Upper lobe of right lung (tissue), 1 donor: ENCODE measurements at regions of chr15 and their contacts with region 1.

Region 1: DNA sequence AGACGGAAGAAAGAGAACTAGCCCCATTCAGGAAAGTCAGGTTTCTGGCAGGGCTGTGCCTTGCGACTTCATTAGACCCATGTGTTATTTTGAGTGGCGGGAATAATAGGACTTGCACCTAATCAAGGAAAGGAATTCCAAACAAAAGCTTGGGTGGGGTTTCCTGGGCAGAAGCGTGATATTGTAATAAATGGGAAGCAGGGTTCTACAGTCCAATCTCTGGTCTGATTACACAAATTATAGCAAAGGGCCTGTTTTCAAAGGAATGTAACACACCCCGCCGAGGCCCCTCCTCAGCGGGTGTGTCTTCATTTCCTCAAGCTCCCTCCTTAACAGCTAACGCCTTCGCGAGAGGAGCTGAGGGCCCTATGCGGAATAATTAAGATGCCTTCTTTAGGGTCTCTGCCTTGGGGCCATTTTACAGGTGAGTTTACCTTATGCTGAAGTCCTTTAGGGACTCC is 396.0 kb upstream of the C2CD4B start:
- DNase-seq: no peak
- ATAC-seq: peak; percentile 65
- H3K4me3 ChIP-seq: no peak overlapping the region
- H3K27ac ChIP-seq: no peak overlapping the region
- H3K4me1 ChIP-seq: peaks cover 9% of the 10 kb centered on the region
- H3K27me3 ChIP-seq: no peaks in the 10 kb centered on the region
- CTCF ChIP-seq: no peak

Region 2: GRCh38 chr15:62742409-62743171 is 181.5 kb after region 1 on chr15:
- intact Hi-C with region 1: loop called (anchors 5 kb)
- DNase-seq: no peak
- ATAC-seq: peak; percentile 79
- H3K4me3 ChIP-seq: no peak overlapping the region
- H3K27ac ChIP-seq: no peak overlapping the region
- H3K4me1 ChIP-seq: peaks cover 7% of the 10 kb centered on the region
- H3K27me3 ChIP-seq: no peaks in the 10 kb centered on the region
- CTCF ChIP-seq: peak; percentile 88

Region 3: GRCh38 chr15:62770752-62771151 is 209.7 kb after region 1 on chr15:
- intact Hi-C with region 1: no loop called
- DNase-seq: no peak
- ATAC-seq: no peak
- H3K4me3 ChIP-seq: no peak overlapping the region
- H3K27ac ChIP-seq: no peak overlapping the region
- H3K4me1 ChIP-seq: no peaks in the 10 kb centered on the region
- H3K27me3 ChIP-seq: no peaks in the 10 kb centered on the region
- CTCF ChIP-seq: no peak